Heart right ventricle (tissue), 16 donors: ENCODE measurements at regions of chr2 and their contacts with region 1.

Region 1: DNA sequence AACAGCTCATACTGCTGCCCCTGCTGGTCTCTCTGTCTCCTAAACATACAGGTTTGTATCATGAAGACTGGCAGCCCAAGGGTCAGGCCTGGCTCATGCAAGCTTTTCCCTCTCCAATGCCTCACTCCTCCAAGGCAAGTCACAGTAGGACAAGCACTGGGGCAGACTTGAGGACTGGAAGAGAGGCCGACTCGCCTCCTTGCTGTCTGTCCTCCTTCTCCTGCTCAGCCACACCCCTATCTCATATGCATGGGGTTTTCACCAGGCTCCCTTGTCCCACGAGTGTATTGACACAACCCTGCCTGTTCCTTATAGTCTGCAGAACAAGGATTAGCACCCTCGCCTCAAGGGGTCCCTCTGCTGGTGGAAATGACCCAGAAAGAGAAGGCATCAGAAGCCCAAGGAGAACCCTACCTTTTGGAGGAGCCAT is 223.7 kb downstream of the SOX11 start:
- DNase-seq: peak in 1 of 2 donors; percentile 22
- ATAC-seq: peak in 3 of 8 donors; percentile 29 to 45 (median 40)
- H3K4me3 ChIP-seq: no peak overlapping the region
- H3K27ac ChIP-seq: peak overlapping the region; percentile 59 to 87 (median 81)
- H3K4me1 ChIP-seq: peaks cover 0 to 23% (median 7%) of the 10 kb centered on the region in 9 donors
- H3K27me3 ChIP-seq: no peaks in the 10 kb centered on the region
- CTCF ChIP-seq: peak in 7 of 9 donors; percentile 27 to 49 (median 38)

Region 2: GRCh38 chr2:5691975-5692529 is 223.8 kb before region 1 on chr2 and contains the start of gene SOX11:
- intact Hi-C with region 1: loop called in 6 of 10 experiments (anchors 5 to 10 kb)
- DNase-seq: peak; percentile 57 to 58
- ATAC-seq: peak in 7 of 8 donors; percentile 54 to 77 (median 65)
- H3K4me3 ChIP-seq: peak within 1 kb of the TSS in 9 of 10 donors; percentile 8 to 50 (median 37)
- H3K27ac ChIP-seq: peak within 1 kb of the TSS in 1 of 10 donors; percentile 43
- H3K4me1 ChIP-seq: peaks cover 2 to 40% (median 30%) of the 10 kb centered on the region in 9 donors
- H3K27me3 ChIP-seq: peaks cover 20 to 88% (median 80%) of the 10 kb centered on the region in 7 donors
- CTCF ChIP-seq: no peak
- total RNA-seq, gene SOX11: 0.25 to 5.8 (median 1.4) TPM